ENCODE measurements at regions of chr19 and their contacts with region 1.

Region 1: DNA sequence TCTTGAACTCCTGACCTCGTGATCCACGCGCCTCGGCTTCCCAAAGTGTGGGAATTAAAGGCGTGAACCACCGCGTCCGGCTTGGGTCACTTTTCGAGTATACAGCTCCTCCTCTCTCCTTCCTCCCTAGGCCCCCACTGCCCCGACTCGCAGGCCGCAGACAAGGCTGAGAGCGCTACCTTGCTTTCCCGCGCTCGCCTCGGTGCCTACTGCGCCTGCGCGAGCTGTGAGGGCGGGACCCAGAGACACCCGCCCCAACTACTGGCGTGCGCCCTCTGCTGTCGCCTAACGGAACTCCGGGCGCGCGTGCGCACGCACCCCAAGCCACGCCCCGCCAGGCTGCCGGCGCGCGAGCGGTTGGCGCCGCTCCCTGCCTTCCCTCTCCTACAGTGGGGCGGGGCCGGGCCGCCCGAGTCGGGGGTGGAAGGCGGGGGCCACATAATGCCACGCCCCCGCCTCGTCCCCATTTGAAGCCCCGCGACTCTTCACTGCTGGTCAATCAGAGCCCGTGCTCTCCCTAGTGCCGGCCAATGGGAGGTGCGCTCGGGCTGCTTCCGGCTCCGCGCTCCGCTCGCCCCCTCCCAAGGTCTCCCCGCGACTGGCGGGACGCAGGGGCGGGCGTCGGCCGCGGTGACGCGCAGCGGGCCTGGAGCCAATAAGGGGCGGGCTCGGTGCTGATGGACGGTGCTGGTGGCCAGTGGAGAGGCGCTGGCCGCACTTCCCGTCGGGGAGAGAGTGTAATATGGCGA is at the start of gene RAB8A:
- DNase-seq: peak; percentile 99
- ATAC-seq: peak; percentile 97 to 98
- total RNA-seq, gene RAB8A: 28.2 to 29.8 TPM

Region 2: DNA sequence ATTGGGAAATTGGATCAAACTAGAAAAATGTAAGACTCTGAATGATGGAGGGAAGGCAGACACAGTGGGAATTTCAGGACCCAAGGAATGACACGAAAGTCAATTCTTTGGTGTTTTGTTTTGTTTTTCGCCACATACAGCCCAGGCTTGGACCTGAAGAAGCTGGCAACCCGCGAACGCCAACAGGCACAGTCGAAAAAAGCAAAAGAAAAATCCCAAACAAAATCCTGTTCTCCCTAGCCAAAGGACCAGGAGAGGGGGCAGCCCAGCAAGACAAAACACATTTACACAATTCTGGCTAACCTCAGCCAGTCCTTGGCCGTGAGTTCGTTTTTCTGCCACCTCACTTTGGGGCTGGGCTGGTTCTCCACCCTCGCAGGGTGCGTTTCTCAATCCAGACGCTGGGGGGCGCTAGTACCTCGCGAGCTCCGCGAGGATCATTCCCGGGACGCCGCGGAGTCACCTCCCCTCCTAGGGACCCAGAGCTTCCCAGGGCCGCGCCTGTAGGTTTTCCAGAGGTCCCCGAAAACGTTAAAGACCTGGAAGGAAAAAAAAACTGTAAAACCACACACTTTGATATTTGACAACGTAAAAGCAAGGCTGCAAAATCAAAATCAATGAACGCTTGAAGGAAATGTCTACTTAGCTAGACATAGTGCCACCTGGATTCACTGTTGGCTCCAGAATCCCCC is 69.9 kb before region 1 on chr19:
- intact Hi-C with region 1: loop called in 1 of 2 experiments (anchors 5 kb)
- DNase-seq: peak; percentile 86
- ATAC-seq: peak; percentile 92 to 94

Region 3: GRCh38 chr19:16076154-16076957 is 35.0 kb before region 1 on chr19 and contains the start of gene TPM4:
- intact Hi-C with region 1: loop called in 1 of 2 experiments (anchors 5 kb)
- DNase-seq: peak; percentile 95
- ATAC-seq: peak; percentile 85 to 88
- total RNA-seq, gene TPM4: 183 to 310 TPM